GM12878 (cell line): ENCODE measurements at regions of chr17 and their contacts with region 1.

Region 1: DNA sequence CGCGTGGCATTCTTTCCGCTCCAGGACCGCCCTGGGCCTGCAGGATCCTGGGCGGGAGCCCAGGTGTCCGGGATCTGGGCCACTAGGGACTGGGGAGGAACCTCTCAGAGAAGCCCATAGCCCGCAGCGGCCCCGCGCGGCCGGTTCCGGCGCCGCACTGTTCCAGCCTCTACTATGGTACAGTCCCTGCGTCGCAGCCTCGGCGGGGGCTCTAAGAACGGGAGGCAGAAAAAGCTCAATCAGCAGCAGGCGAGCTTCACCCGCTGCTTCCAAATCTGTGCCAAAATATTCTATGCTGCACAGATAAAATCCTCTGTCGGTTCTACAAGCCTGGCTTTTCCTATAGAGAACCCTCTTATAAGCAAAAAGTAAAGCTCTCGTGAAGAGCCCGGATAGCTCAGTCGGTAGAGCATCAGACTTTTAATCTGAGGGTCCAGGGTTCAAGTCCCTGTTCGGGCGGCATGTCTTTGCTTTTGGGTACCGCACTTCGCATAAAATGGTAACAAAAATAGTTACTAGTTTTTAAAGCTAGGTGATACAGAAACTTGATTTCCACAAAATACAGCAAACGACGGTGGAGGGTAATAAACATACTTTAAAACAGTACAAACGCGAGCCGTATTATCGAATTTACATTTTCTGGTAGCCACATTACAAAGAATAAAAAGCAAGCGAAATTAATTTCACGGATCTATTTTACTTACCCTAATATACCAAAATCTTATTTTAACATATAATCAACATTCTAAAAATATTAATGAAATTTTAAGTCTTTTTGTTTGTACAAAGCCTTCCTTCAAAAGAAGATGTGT is 661 bp upstream of the ALOXE3 start:
- DNase-seq: peak; percentile 57
- ATAC-seq: peak; percentile 70
- H3K4me3 ChIP-seq: peak overlapping the region; percentile 86
- H3K27ac ChIP-seq: peak overlapping the region; percentile 12; the same call in 1 of the 2 replicates
- H3K4me1 ChIP-seq: peaks cover 26% of the 10 kb centered on the region
- H3K27me3 ChIP-seq: peaks cover 3 to 9% of the 10 kb centered on the region in 2 experiments; a peak in 3 of 4 replicates
- CTCF ChIP-seq: peak; percentile 85 to 94 (median 93)
- EP300 ChIP-seq: peak in 1 of 2 experiments; percentile 82; a peak in 1 of 4 replicates
- POLR2A ChIP-seq: no peak
- RAD21 ChIP-seq: peak; percentile 46

Region 2: GRCh38 chr17:8048236-8048635 is 70.7 kb before region 1 on chr17:
- CTCF ChIA-PET with region 1: no interaction called
- POLR2A ChIA-PET with region 1: no interaction called
- RAD21 ChIA-PET with region 1: no interaction called
- SMC1A ChIA-PET with region 1: no interaction called
- in situ Hi-C with region 1: no loop called
- intact Hi-C with region 1: no loop called
- DNase-seq: no peak
- ATAC-seq: no peak
- H3K4me3 ChIP-seq: no peak overlapping the region
- H3K27ac ChIP-seq: no peak overlapping the region
- H3K4me1 ChIP-seq: no peaks in the 10 kb centered on the region
- H3K27me3 ChIP-seq: peaks cover 3 to 4% of the 10 kb centered on the region in 2 experiments; a peak in 1 of 4 replicates
- CTCF ChIP-seq: no peak
- EP300 ChIP-seq: no peak
- POLR2A ChIP-seq: no peak
- RAD21 ChIP-seq: no peak

Region 3: GRCh38 chr17:8079291-8080207 is 39.4 kb before region 1 on chr17:
- CTCF ChIA-PET with region 1: interaction called, 116 read pairs
- POLR2A ChIA-PET with region 1: interaction called, 6 read pairs
- RAD21 ChIA-PET with region 1: interaction called, 20 read pairs
- SMC1A ChIA-PET with region 1: interaction called, 15 read pairs
- in situ Hi-C with region 1: loop called (anchors 5 kb)
- intact Hi-C with region 1: loop called (anchors 2 kb)
- DNase-seq: no peak
- ATAC-seq: peak; percentile 96
- H3K4me3 ChIP-seq: peak overlapping the region; percentile 75
- H3K27ac ChIP-seq: no peak overlapping the region
- H3K4me1 ChIP-seq: peaks cover 4% of the 10 kb centered on the region; the same call in 1 of the 2 replicates
- H3K27me3 ChIP-seq: peaks cover 3% of the 10 kb centered on the region in 2 experiments; a peak in 3 of 4 replicates
- CTCF ChIP-seq: peak; percentile 78 to 91 (median 90)
- EP300 ChIP-seq: no peak
- POLR2A ChIP-seq: no peak; the same call in 1 of the 2 replicates
- RAD21 ChIP-seq: peak; percentile 57

Region 4: GRCh38 chr17:8131844-8132441 is 13.0 kb after region 1 on chr17:
- CTCF ChIA-PET with region 1: interaction called, 40 read pairs
- POLR2A ChIA-PET with region 1: interaction called, 17 read pairs
- RAD21 ChIA-PET with region 1: interaction called, 7 read pairs
- SMC1A ChIA-PET with region 1: interaction called, 9 read pairs
- in situ Hi-C with region 1: no loop called
- intact Hi-C with region 1: no loop called
- DNase-seq: no peak
- ATAC-seq: peak; percentile 42; the same call in 2 of the 3 replicates
- H3K4me3 ChIP-seq: no peak overlapping the region
- H3K27ac ChIP-seq: no peak overlapping the region
- H3K4me1 ChIP-seq: 0 out of 2 replicates have a peak, but pooled peaks cover 4% of the 10 kb centered on the region
- H3K27me3 ChIP-seq: no peaks in the 10 kb centered on the region
- CTCF ChIP-seq: no peak
- EP300 ChIP-seq: no peak
- POLR2A ChIP-seq: no peak
- RAD21 ChIP-seq: no peak

Region 5: DNA sequence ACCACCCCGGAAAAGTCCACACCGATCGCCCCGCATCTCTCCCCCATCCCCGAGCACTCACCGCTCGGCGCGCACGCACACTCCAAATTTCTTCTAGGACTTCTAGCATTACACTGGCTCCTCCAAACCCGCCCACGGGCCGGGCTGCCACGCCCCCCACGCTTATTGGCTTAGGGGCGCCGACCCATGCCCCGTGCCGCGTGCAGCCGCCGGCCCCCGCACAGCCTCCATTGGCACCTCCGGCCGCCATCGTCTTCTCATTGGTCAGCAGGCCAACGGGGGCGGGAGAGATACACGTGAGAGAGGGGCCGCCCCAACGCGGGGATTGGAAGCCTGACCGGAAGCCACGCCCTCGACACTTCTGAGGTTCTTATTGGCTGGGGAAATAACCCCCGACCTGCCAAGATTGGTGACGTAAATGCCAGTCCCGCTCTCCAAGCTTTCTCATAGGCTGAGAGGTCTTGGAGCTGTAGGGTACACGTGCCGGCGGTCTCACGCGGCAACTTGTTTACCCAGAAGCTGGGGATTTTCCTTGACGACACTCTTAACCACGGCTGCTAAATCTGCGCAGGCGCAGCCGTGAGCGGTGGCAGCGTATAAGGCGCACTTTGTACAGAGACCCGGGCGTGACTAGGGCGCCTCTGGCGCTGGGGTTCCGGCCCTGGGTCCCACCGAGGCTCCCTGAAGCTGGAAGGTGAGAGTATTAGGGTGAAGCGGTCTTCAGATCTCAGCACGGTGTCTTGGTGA is 37.4 kb after region 1 on chr17:
- CTCF ChIA-PET with region 1: interaction called, 46 read pairs
- POLR2A ChIA-PET with region 1: interaction called, 28 read pairs
- RAD21 ChIA-PET with region 1: interaction called, 16 read pairs
- SMC1A ChIA-PET with region 1: interaction called, 23 read pairs
- in situ Hi-C with region 1: no loop called
- intact Hi-C with region 1: loop called (anchors 1 kb)
- DNase-seq: peak; percentile 100
- ATAC-seq: peak; percentile 83
- H3K4me3 ChIP-seq: peak overlapping the region; percentile 86
- H3K27ac ChIP-seq: peak overlapping the region; percentile 94
- H3K4me1 ChIP-seq: peaks cover 21% of the 10 kb centered on the region
- H3K27me3 ChIP-seq: no peaks in the 10 kb centered on the region
- CTCF ChIP-seq: peak in 1 of 3 experiments; percentile 23; a peak in 1 of 6 replicates
- EP300 ChIP-seq: peak; percentile 0 to 53; a peak in 3 of 4 replicates
- POLR2A ChIP-seq: peak; percentile 87
- RAD21 ChIP-seq: no peak

Region 6: GRCh38 chr17:8189711-8190477 is 70.9 kb after region 1 on chr17 and contains the start of gene BORCS6:
- CTCF ChIA-PET with region 1: interaction called, 25 read pairs
- POLR2A ChIA-PET with region 1: interaction called, 12 read pairs
- RAD21 ChIA-PET with region 1: interaction called, 11 read pairs
- SMC1A ChIA-PET with region 1: interaction called, 7 read pairs
- in situ Hi-C with region 1: no loop called
- intact Hi-C with region 1: loop called (anchors 2 kb)
- DNase-seq: peak; percentile 94
- ATAC-seq: peak; percentile 75
- H3K4me3 ChIP-seq: peak within 1 kb of the TSS; percentile 75
- H3K27ac ChIP-seq: peak within 1 kb of the TSS; percentile 90
- H3K4me1 ChIP-seq: peaks cover 17% of the 10 kb centered on the region
- H3K27me3 ChIP-seq: no peaks in the 10 kb centered on the region
- CTCF ChIP-seq: peak in 2 of 3 experiments; percentile 8 to 16; a peak in 2 of 6 replicates
- EP300 ChIP-seq: no peak
- POLR2A ChIP-seq: peak; percentile 90
- RAD21 ChIP-seq: no peak
- polyA plus RNA-seq, gene BORCS6: 0.37 to 0.64 TPM

Region 7: GRCh38 chr17:8294814-8295316 is 175.9 kb after region 1 on chr17:
- CTCF ChIA-PET with region 1: interaction called, 15 read pairs
- POLR2A ChIA-PET with region 1: interaction called, 7 read pairs
- RAD21 ChIA-PET with region 1: interaction called, 9 read pairs
- SMC1A ChIA-PET with region 1: interaction called, 3 read pairs
- in situ Hi-C with region 1: loop called (anchors 5 kb)
- intact Hi-C with region 1: loop called (anchors 5 kb)
- DNase-seq: no peak
- ATAC-seq: no peak
- H3K4me3 ChIP-seq: peak overlapping the region; percentile 62
- H3K27ac ChIP-seq: peak overlapping the region; percentile 41
- H3K4me1 ChIP-seq: peaks cover 21% of the 10 kb centered on the region
- H3K27me3 ChIP-seq: no peaks in the 10 kb centered on the region
- CTCF ChIP-seq: no peak
- EP300 ChIP-seq: no peak
- POLR2A ChIP-seq: no peak
- RAD21 ChIP-seq: no peak